ENCODE measurements at regions of chr21 and their contacts with region 1.

Region 1: DNA sequence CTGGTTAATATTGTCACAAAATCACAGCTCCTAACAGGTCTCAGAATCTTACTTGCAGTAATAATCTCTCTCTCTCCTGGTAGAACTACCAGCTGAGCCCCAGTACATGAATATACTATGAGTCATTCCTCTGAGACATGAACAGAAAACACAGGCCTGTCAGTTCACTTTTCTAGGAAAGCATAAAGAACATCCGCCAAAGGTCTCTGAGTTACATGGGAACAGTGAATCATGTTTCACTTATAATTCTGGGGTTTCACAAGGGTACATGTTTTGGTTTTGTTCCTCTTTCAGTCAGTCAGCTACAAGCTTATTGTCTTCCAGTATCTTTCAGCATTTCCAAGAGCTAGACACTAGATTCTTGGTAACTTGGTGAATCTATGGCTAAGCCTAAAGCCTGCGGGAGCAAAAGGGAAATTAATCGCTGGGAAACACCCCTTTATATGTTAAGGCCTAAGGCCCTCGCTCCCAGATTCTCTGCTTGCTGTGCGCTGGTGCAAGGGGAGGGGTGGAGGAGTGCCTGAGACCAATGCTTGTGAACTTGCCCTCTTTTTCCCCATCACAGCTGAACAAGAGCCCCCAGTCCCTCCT is 31.7 kb downstream of the IFNGR2 start:
- DNase-seq: no peak
- H3K4me3 ChIP-seq: no peak overlapping the region
- H3K27ac ChIP-seq: peak overlapping the region; percentile 70 to 83 (median 80)
- H3K4me1 ChIP-seq: peaks cover 0 to 24% (median 24%) of the 10 kb centered on the region in 4 donors
- H3K27me3 ChIP-seq: no peaks in the 10 kb centered on the region
- CTCF ChIP-seq: no peak
- EP300 ChIP-seq: peak in 1 of 4 donors; percentile 13
- POLR2A ChIP-seq: no peak

Region 2: DNA sequence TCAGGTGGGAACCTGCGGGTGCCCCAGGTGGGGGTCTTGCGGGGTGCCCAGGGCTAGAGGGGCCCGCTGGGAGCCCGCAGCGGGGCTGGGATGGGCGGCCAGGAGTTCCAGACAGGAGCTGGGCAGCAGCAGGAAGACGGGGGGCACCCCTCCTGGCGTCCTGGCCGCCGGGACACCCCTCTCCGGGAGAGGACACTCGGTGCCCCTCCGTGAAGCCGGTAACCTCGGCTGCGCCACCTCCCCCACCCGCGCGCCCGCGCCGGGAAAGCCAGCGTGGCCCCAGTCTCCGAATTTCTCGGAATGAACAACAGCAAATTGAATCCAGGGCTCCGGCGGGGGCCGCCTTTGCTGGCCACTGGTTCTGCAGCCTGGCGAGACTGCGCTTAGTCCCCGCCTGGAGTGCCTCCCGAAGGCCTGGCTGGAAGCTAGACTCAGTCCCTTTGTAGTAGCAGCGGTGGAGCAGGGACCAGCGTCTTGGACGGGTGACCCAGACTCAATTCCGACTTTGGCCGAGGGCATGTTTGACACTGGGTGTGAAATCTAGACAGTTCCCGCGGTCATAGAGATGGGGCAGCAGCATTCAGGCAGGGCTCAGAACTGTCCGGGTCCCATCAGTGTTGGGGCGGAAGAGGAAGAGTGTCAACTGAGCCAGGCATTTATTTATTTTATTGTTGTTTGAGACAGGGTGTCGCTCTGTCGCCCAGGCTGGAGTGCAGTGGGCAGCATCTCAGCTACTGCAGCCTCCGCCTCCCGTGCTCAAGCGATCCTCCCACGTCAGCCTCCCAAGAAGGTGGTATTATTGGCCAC is 30.9 kb before region 1 on chr21:
- intact Hi-C with region 1: loop called (anchors 5 kb)
- DNase-seq: peak; percentile 83
- H3K4me3 ChIP-seq: peak overlapping the region; percentile 61 to 85 (median 78)
- H3K27ac ChIP-seq: peak overlapping the region; percentile 84 to 94 (median 90)
- H3K4me1 ChIP-seq: peaks cover 0 to 40% (median 30%) of the 10 kb centered on the region in 4 donors
- H3K27me3 ChIP-seq: no peaks in the 10 kb centered on the region
- CTCF ChIP-seq: no peak
- EP300 ChIP-seq: no peak
- POLR2A ChIP-seq: peak; percentile 17 to 22

Region 3: GRCh38 chr21:33514229-33514628 is 79.4 kb after region 1 on chr21:
- intact Hi-C with region 1: no loop called
- DNase-seq: no peak
- H3K4me3 ChIP-seq: no peak overlapping the region
- H3K27ac ChIP-seq: no peak overlapping the region
- H3K4me1 ChIP-seq: no peaks in the 10 kb centered on the region
- H3K27me3 ChIP-seq: no peaks in the 10 kb centered on the region
- CTCF ChIP-seq: no peak
- EP300 ChIP-seq: no peak
- POLR2A ChIP-seq: no peak